ENCODE measurements at regions of chr3 and their contacts with region 1.

Region 1: GRCh38 chr3:139745831-139746230 is 68.1 kb upstream of the NMNAT3 start:
- DNase-seq: no peak
- ATAC-seq: peak; percentile 52; the same call in 1 of the 2 replicates
- H3K4me3 ChIP-seq: no peak overlapping the region
- H3K27ac ChIP-seq: no peak overlapping the region
- H3K4me1 ChIP-seq: no peaks in the 10 kb centered on the region
- H3K27me3 ChIP-seq: peaks cover 20% of the 10 kb centered on the region
- CTCF ChIP-seq: no peak
- POLR2A ChIP-seq: no peak
- RAD21 ChIP-seq: no peak

Region 2: DNA sequence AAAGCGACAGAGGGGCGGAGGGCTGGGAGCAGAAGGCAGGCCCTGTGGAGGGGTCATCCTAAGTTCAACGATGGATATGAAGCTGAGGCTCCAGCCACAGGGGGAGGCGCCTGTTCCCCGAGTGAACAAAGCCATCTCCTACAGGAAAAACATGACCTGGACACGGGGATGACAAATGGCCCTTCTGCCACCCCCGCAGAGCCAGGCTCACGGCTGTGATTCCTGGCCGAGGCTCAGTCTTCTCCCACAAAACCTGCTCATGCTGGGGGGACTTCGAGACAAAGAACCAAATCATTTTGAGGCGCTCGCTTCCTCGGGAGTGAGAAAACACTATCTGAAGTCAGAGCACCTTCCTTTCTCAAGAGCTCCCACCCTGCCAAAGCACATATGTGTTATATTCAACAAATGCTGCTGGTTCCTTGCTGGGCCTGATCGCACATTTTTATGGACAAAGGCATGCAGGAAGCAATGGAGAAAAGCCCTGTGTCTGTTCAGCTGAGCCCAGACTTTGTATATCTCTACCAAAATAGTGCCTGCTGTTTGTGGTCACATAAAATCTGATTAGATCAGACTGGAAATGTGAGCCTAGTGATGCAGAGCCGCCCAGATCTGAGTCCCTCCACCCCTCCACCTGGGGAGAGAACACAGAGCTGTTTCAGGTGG is 211.9 kb before region 1 on chr3:
- CTCF ChIA-PET with region 1: no interaction called
- POLR2A ChIA-PET with region 1: no interaction called
- RAD21 ChIA-PET with region 1: no interaction called
- intact Hi-C with region 1: no loop called
- DNase-seq: peak; percentile 69
- ATAC-seq: peak; percentile 55
- H3K4me3 ChIP-seq: peak overlapping the region; percentile 6 to 35
- H3K27ac ChIP-seq: peak overlapping the region; percentile 81
- H3K4me1 ChIP-seq: peaks cover 63 to 66% of the 10 kb centered on the region in 2 experiments
- H3K27me3 ChIP-seq: no peaks in the 10 kb centered on the region
- CTCF ChIP-seq: no peak
- POLR2A ChIP-seq: no peak
- RAD21 ChIP-seq: no peak

Region 3: GRCh38 chr3:139870000-139870675 is 124.3 kb after region 1 on chr3:
- CTCF ChIA-PET with region 1: no interaction called
- POLR2A ChIA-PET with region 1: no interaction called
- RAD21 ChIA-PET with region 1: no interaction called
- intact Hi-C with region 1: loop called (anchors 5 kb)
- DNase-seq: no peak
- ATAC-seq: peak; percentile 36; the same call in 1 of the 2 replicates
- H3K4me3 ChIP-seq: no peak overlapping the region
- H3K27ac ChIP-seq: no peak overlapping the region
- H3K4me1 ChIP-seq: no peaks in the 10 kb centered on the region
- H3K27me3 ChIP-seq: peaks cover 65% of the 10 kb centered on the region
- CTCF ChIP-seq: no peak
- POLR2A ChIP-seq: no peak
- RAD21 ChIP-seq: no peak